Left cardiac atrium (tissue), 4 donors: ENCODE measurements at regions of chr1 and their contacts with region 1.

Region 1: GRCh38 chr1:208245185-208245705 is 1.1 kb upstream of the PLXNA2 start:
- DNase-seq: peak; percentile 94
- ATAC-seq: peak; percentile 80 to 81

Region 2: DNA sequence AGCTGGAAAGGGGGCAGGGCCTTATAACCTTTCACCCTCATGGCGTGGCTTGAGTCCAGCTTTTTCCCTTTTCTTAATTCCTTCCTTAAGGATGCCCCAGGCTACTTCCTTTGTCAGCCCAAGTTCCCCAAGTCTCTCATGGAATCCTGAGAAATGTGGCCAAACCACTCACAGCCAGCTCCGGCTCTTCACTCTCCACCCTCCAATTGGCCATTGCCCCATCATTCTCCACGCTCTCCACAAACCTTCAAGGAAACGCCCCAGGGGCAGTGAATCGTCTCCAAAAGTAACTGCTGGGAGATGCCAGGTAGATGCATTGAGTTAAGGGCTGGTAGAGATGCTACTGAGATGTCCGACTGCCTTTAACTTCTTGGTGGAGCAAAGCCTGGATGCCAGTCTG is 220.8 kb before region 1 on chr1:
- intact Hi-C with region 1: loop called (anchors 5 kb)
- DNase-seq: no peak
- ATAC-seq: no peak

Region 3: DNA sequence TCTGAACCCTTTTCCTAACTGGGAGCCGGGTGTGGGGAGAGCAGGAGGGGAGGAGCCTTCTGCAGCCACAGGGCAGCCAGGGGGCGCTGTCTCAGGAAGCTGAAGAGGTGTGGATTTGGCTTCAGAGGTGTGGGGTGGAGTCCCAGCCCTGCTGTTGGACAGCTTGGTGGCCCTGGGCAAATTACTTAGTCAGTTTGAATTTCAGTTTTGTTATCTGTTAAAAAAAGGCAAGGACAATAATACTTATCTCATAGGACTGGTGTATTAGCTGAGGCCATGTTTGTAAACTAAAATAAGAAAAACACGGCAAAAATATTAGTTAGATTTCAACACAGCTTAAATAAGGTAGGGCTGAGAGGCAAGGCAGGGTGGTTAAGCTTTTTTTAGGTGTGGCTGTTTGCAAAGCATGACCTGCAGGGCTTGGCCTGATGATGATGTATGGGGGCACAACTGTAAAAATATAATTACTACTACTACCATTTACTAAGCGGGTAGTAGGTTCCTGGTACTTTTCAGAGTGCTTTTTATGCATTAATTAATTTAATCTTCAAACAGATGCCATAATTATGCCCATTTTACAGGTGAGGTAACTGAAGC is 112.9 kb before region 1 on chr1:
- intact Hi-C with region 1: loop called (anchors 5 to 10 kb)
- DNase-seq: peak; percentile 86
- ATAC-seq: peak; percentile 85 to 87

Region 4: GRCh38 chr1:208170252-208170651 is 75.0 kb before region 1 on chr1:
- intact Hi-C with region 1: no loop called
- DNase-seq: no peak
- ATAC-seq: no peak

Region 5: GRCh38 chr1:208184088-208184911 is 60.9 kb before region 1 on chr1:
- intact Hi-C with region 1: loop called in 1 of 2 experiments (anchors 5 kb)
- DNase-seq: peak; percentile 72
- ATAC-seq: peak; percentile 82 to 95

Region 6: DNA sequence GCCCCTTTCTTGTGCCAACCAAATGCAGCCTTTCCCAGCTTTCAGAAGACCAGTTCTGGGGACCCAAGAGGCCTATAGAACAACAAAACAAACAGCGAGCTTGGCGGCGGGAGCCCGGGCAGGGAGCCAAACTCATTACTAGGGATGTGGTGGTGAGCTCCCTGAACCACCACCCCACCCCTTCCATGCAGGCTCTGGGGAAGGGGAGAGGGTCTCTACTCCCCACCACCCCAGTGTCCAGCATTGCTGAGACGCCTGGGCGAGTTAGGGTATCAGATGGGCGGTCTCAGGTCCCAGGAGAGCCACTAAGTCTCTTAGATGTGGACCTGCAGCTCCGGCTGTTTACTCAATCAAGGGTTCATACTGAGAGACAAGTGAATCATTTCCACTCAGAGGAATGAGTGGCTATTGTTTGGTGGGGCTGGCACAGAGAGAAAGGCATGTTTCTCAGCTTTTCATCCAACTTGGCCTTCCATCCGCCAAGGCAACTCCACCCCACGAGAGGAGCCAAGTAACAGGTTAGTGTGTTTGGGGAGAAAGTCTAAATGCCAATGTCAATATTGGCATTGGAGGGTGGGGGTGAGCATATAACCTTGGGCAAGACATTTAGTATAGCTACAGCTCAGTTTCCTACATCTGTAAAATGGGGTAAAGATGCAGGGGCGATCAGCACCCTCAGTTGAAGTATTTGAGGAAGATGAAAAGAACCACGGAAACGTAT is 42.0 kb before region 1 on chr1:
- intact Hi-C with region 1: loop called in 1 of 2 experiments (anchors 5 kb)
- DNase-seq: peak; percentile 70
- ATAC-seq: peak; percentile 20 to 61